ENCODE measurements at regions of chr7 and their contacts with region 1.

Region 1: DNA sequence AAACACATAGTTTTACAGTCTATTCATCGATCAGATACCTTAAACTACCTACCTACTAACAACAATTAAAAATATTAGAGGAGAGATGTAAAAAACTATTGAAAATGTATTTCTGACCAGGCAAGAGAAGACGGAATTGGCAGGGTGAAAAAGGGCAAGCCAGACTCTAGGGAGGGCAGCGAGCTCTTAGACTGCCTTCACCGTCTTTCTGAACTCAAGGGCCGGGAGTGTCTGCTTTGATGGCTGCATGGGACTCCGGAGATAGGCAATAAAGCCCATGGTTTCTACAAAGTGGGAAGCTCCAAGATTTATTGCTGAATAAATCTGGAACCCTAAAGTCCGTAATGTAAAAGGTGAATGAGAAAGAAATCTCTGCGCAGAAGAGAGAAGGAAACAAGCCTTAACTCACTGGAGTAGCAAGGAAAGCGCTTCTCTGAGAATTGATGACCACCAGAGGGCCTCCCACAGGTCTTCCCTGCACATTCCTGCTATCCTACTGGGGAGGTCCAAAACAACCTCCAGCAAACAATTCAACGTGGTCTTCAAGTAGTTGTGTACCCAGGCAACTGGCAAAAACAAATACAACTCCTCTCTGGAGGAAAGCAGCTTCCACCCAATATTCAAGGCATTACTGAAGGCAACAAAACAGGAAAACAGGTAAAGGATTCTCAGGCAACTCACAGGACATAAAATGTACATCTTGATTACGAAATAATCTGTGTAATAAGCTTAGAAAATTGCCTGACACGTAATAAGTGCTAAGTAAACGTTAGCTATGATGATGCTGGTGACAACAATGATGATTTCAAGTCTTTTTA is 181.3 kb downstream of the SDK1 start:
- DNase-seq: no peak
- H3K4me3 ChIP-seq: no peak overlapping the region
- H3K27ac ChIP-seq: no peak overlapping the region
- H3K4me1 ChIP-seq: no peaks in the 10 kb centered on the region
- H3K27me3 ChIP-seq: no peaks in the 10 kb centered on the region
- CTCF ChIP-seq: peak; percentile 41

Region 2: DNA sequence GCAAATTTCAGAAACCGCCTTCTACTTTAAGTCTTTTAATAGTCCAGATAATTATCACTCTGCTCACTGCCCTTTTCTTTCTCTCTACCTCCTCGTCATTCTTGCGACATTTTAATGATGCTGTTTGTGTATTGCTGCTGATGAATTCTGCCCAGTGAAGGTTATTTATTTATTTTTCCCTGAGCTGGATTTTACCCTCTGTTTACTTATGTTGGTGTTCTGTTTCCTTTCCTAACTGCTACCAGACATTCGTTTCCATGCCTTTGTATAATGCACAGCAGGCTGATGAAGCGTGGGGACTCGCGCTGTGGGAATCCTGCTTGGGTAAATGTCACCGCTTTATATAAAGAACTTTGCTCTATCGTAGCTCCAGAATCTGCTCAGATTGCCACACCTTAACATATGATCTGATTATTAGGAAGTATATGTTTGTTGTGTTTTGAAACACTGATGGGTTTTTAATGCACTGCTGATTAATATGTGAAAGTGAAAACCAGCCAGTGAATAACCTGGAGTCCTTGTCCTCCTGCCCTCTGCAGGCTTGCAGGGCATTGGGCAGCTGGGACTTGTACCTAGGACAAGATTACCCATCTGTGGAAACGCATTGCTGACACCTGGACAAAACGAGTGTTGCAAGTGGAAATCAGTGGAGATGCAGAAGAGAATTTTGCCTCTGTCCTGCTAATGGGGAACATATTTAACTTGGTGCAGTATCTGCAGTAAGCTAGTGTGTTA is 110.2 kb after region 1 on chr7:
- intact Hi-C with region 1: loop called (anchors 5 kb)
- DNase-seq: no peak
- H3K4me3 ChIP-seq: peak overlapping the region; percentile 4
- H3K27ac ChIP-seq: no peak overlapping the region
- H3K4me1 ChIP-seq: no peaks in the 10 kb centered on the region
- H3K27me3 ChIP-seq: no peaks in the 10 kb centered on the region
- CTCF ChIP-seq: no peak

Region 3: GRCh38 chr7:3712841-3713240 is 230.5 kb after region 1 on chr7:
- intact Hi-C with region 1: loop called (anchors 10 kb)
- DNase-seq: peak; percentile 50
- H3K4me3 ChIP-seq: no peak overlapping the region
- H3K27ac ChIP-seq: no peak overlapping the region
- H3K4me1 ChIP-seq: no peaks in the 10 kb centered on the region
- H3K27me3 ChIP-seq: no peaks in the 10 kb centered on the region
- CTCF ChIP-seq: no peak